HepG2 (cell line): ENCODE measurements at regions of chr3 and their contacts with region 1.

Region 1: GRCh38 chr3:40299721-40300335 is 9.7 kb upstream of the EIF1B start:
- DNase-seq: no peak
- ATAC-seq: no peak
- H3K4me3 ChIP-seq: no peak overlapping the region
- H3K27ac ChIP-seq: no peak overlapping the region
- H3K4me1 ChIP-seq: peaks cover 6% of the 10 kb centered on the region; the same call in 1 of the 2 replicates
- H3K27me3 ChIP-seq: no peaks in the 10 kb centered on the region
- CTCF ChIP-seq: no peak
- EP300 ChIP-seq: peak in 1 of 2 experiments; percentile 10; a peak in 1 of 4 replicates
- POLR2A ChIP-seq: no peak
- RAD21 ChIP-seq: no peak

Region 2: GRCh38 chr3:39911465-39912309 is 388.1 kb before region 1 on chr3:
- CTCF ChIA-PET with region 1: no interaction called
- POLR2A ChIA-PET with region 1: no interaction called
- in situ Hi-C with region 1: no loop called
- intact Hi-C with region 1: loop called (anchors 10 kb)
- DNase-seq: peak; percentile 23
- ATAC-seq: peak; percentile 75
- H3K4me3 ChIP-seq: peak overlapping the region in 1 of 3 experiments; percentile 5; a peak in 1 of 6 replicates
- H3K27ac ChIP-seq: peak overlapping the region; percentile 64
- H3K4me1 ChIP-seq: peaks cover 41% of the 10 kb centered on the region
- H3K27me3 ChIP-seq: peaks cover 0 to 1% of the 10 kb centered on the region in 2 experiments; a peak in 1 of 5 replicates
- CTCF ChIP-seq: no peak
- EP300 ChIP-seq: no peak
- POLR2A ChIP-seq: no peak
- RAD21 ChIP-seq: no peak